WTC11 (cell line): ENCODE measurements at regions of chr20 and their contacts with region 1.

Region 1: DNA sequence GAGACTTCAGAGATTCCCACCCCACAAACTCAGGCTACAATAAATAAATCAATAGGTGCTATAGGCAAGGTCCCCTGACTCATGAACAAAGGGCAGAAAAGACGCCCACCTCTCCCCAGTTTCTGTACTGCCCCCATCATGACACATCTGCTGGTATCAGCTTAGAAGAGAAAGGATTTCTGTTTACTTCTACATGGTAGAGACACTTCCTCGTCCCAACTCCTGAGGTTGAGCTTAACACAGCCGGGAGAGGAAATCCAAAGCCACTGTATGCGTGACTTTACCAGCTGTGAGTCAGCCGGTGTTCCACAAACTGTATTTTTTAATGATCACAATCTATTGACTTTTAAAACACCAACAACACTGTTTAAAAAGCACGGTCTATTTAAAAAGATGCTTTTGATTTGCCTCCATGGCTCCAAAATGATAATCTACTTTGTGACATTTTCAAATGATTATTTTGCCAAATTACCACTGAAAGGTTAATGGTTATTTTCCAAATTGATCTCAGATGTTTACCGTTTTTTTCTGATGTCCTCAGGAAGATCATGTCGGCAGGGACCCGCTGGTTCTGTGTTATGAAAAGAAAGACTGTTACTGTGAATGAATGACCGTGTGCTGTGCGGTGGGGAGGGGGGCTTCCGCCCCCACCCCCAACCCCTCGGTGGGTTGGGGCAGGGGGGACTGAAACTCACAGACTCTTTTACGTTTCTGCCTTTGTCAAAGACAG is 72.5 kb downstream of the ATP9A start:
- DNase-seq: no peak
- ATAC-seq: 0 out of 2 replicates have a peak, but pooled peaks have one; percentile 15
- H3K4me3 Mint-ChIP-seq: peak overlapping the region; percentile 46
- H3K27ac Mint-ChIP-seq: peak overlapping the region; percentile 95
- H3K4me1 Mint-ChIP-seq: peaks cover 40% of the 10 kb centered on the region
- H3K27me3 Mint-ChIP-seq: no peaks in the 10 kb centered on the region
- CTCF ChIP-seq: no peak

Region 2: GRCh38 chr20:51569827-51570738 is 125.7 kb before region 1 on chr20:
- CTCF ChIA-PET with region 1: no interaction called
- POLR2A ChIA-PET with region 1: no interaction called
- DNase-seq: no peak
- ATAC-seq: no peak
- H3K4me3 Mint-ChIP-seq: no peak overlapping the region
- H3K27ac Mint-ChIP-seq: no peak overlapping the region
- H3K4me1 Mint-ChIP-seq: no peaks in the 10 kb centered on the region
- H3K27me3 Mint-ChIP-seq: no peaks in the 10 kb centered on the region; the same call in none of the 2 replicates
- CTCF ChIP-seq: no peak

Region 3: GRCh38 chr20:51624157-51624731 is 71.5 kb before region 1 on chr20:
- CTCF ChIA-PET with region 1: interaction called, 12 read pairs
- POLR2A ChIA-PET with region 1: no interaction called
- DNase-seq: peak; percentile 84
- ATAC-seq: peak; percentile 92
- H3K4me3 Mint-ChIP-seq: no peak overlapping the region
- H3K27ac Mint-ChIP-seq: peak overlapping the region; percentile 84; the same call in 1 of the 2 replicates
- H3K4me1 Mint-ChIP-seq: peaks cover 9% of the 10 kb centered on the region
- H3K27me3 Mint-ChIP-seq: no peaks in the 10 kb centered on the region
- CTCF ChIP-seq: peak; percentile 76

Region 4: DNA sequence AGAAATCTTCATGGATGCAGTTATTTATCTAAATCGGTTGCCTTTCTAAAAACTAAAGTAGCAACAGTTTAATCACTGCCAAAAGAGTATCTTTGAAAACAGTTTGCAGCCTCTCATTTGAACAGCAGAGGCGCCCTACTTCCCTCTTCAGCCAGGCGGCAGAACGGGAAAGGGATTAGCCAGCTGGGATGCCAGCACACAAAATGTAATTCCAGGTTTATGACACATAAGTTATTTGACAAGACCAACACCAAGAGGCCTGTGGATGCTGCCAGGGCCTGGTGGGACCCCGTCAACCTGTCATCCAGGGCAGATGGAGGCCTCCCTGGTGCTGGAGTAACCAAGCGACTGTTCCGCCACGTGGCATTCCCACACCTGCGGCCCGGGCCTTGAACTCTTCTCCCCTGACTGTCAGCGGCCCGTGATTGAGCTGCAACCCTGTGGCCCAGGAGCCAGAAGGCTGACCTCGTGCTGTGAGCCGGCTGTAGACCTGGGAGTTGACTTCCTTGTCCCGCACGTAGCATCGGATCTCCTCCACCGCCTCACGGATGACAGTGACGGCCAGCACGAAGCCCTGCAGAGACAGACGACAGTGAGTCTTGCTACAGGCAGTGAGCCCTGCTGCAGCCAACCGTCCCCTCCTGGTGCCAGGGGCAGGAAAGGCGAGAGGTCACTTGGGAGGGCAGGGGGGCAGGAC is 16.9 kb after region 1 on chr20:
- CTCF ChIA-PET with region 1: interaction called, 21 read pairs
- POLR2A ChIA-PET with region 1: no interaction called
- DNase-seq: peak; percentile 52
- ATAC-seq: peak; percentile 49
- H3K4me3 Mint-ChIP-seq: no peak overlapping the region
- H3K27ac Mint-ChIP-seq: 0 out of 2 replicates have a peak overlapping the region, but pooled peaks have one; percentile 15
- H3K4me1 Mint-ChIP-seq: peaks cover 48% of the 10 kb centered on the region
- H3K27me3 Mint-ChIP-seq: no peaks in the 10 kb centered on the region
- CTCF ChIP-seq: peak; percentile 47

Region 5: DNA sequence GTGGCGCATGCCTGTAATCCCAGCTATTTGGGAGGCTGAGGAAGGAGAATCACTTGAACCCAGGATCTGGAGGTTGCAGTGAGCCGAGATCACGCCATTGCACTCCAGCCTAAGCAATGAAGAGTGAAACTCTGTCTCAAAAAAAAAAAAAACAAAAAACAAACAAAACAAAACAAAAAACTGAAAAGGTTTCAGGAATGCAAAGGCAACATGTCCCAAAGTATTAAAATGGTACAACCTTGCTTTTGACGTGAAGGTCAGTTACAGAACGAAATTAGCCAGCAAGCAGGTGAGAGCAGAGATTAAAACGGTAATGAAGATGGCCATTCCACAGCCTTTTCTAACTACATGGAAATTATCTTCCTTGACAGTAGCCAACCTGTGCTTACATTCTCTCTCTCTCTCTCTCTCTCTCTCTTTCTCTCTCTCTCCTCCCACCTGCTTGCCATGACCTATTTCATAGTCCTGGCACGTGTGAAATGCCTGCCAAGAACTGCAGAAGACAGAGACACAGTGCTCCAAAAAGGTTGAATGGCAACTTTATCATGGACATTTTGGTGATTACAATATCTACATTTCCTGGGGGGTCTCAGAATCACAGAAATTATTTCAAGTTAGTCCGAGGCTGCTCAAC is 145.0 kb after region 1 on chr20:
- CTCF ChIA-PET with region 1: no interaction called
- POLR2A ChIA-PET with region 1: no interaction called
- DNase-seq: no peak
- ATAC-seq: no peak
- H3K4me3 Mint-ChIP-seq: no peak overlapping the region
- H3K27ac Mint-ChIP-seq: peak overlapping the region; percentile 80; the same call in 1 of the 2 replicates
- H3K4me1 Mint-ChIP-seq: peaks cover 14% of the 10 kb centered on the region
- H3K27me3 Mint-ChIP-seq: no peaks in the 10 kb centered on the region
- CTCF ChIP-seq: no peak

Region 6: GRCh38 chr20:51966291-51966971 is 270.7 kb after region 1 on chr20:
- CTCF ChIA-PET with region 1: interaction called, 11 read pairs
- POLR2A ChIA-PET with region 1: no interaction called
- DNase-seq: peak; percentile 71
- ATAC-seq: peak; percentile 96
- H3K4me3 Mint-ChIP-seq: no peak overlapping the region
- H3K27ac Mint-ChIP-seq: no peak overlapping the region
- H3K4me1 Mint-ChIP-seq: peaks cover 25% of the 10 kb centered on the region
- H3K27me3 Mint-ChIP-seq: no peaks in the 10 kb centered on the region
- CTCF ChIP-seq: peak; percentile 58

Region 7: DNA sequence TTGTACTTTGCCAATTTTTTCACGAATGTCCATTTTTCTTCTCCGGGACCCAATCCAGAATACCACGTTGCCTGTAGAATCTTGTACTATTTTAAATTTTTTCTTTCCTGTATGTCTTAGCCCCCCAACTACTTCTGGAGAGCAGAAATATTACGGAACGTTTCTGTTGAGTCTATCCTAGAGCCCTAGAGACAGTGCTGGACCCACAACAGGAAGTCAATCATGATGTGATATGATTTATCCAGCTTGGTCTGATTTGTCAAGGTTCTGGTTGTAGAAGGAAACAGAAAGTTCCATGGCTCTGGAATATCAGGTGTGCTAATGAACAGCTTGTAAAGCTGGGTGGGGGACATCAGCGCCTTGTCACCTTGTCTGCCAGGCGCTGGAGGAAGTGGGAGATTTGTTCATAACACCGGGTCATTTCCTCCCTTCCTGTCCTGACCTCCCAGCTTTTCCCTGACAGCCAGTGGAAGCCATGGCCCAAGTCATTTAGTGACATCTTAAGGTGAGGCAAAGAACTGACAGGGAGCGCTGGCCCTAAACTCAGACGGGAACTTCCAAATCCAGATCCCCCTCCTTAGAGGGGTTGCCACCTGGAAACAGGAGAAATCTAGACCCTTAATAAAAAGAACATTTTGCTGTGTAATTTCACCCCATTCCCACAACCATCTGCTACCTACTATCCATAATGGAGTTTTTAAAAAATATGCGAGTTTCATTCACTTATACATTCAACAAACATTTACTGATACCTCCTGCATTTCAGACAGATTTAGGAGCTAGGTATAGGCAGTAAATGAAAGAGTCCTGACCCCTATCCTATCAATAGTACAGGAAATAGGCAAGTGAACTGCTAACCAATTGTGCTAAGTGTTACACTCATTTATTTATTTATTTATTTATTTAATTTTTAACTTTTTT is 365.3 kb after region 1 on chr20:
- CTCF ChIA-PET with region 1: interaction called, 13 read pairs
- POLR2A ChIA-PET with region 1: no interaction called
- DNase-seq: peak; percentile 45
- ATAC-seq: peak; percentile 97
- H3K4me3 Mint-ChIP-seq: no peak overlapping the region
- H3K27ac Mint-ChIP-seq: peak overlapping the region; percentile 58
- H3K4me1 Mint-ChIP-seq: peaks cover 10% of the 10 kb centered on the region
- H3K27me3 Mint-ChIP-seq: no peaks in the 10 kb centered on the region; the same call in 1 of the 2 replicates
- CTCF ChIP-seq: no peak